Mammary epithelial cell (primary cell): ENCODE measurements at regions of chr4 and their contacts with region 1.

Region 1: DNA sequence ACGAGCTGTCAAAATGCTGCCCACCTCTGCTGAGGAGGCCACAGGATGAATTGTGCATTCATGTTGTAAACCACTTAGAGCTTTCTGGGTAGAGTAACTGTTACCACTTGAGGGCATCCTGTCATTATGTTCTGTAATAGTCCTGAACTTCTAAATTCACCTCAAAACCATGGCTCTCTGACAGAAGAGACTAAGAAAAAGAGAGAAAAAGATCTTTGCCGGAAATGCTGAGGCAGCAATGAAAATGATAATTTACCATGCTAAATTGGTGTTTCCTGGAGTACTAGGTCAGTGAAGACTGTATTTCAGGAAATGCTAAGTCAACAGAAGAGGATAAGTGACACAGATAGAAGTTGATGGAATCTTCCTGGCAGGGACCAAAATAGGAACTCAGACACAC is 942.3 kb upstream of the SLIT2 start:
- DNase-seq: peak; percentile 14
- H3K4me3 ChIP-seq: no peak overlapping the region
- H3K27ac ChIP-seq: no peak overlapping the region
- H3K4me1 ChIP-seq: no peaks in the 10 kb centered on the region
- H3K27me3 ChIP-seq: no peaks in the 10 kb centered on the region
- CTCF ChIP-seq: peak; percentile 21 to 61

Region 2: GRCh38 chr4:18689308-18690115 is 619.9 kb before region 1 on chr4:
- CTCF ChIA-PET with region 1: no interaction called
- dilution Hi-C with region 1: no loop called
- in situ Hi-C with region 1: no loop called
- intact Hi-C with region 1: loop called (anchors 2 kb)
- DNase-seq: peak; percentile 28
- H3K4me3 ChIP-seq: no peak overlapping the region
- H3K27ac ChIP-seq: no peak overlapping the region
- H3K4me1 ChIP-seq: no peaks in the 10 kb centered on the region
- H3K27me3 ChIP-seq: no peaks in the 10 kb centered on the region
- CTCF ChIP-seq: peak; percentile 79 to 83

Region 3: DNA sequence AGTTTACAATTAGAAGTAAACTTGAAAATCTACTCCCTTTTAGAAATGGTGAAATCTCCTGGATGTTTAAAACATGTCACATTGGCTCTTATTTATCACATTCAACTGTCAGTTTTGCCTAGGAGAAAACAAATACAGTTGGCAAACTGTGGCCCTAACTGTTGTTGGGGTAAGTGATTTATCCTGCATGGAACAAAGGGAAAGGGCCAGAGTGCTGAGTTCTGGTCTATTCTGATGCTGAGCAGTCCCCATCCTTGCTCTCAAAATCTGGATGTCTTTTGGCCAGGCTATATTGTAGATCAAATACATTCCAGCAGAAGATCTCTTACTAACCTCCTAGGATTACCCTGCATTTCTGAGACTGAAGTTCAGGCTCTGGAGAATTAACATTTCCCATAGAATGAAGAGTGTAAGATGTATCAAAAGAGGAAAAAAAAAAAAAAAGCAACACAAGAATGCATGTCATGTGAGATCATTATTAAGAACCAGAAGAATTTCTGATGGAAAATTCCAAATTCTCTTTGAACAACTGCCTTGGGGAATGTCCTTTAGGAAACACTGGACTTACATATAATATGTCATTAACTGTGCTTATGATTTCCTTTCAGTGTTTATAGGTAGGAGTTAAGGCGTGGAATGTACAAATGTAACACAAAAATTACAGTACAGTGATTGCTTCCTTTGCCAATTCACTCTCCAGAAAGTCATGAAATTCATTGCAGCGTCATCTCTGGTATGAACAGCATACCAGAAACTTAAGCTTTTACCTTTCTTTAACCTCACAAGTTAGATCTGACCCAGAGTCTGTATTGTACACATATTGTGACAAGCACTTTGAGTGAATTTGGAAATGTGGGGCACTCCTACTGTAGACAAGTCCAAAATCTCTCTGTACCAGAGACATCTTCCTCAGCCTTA is 275.3 kb before region 1 on chr4:
- CTCF ChIA-PET with region 1: no interaction called
- dilution Hi-C with region 1: no loop called
- in situ Hi-C with region 1: no loop called
- intact Hi-C with region 1: no loop called
- DNase-seq: no peak
- H3K4me3 ChIP-seq: no peak overlapping the region
- H3K27ac ChIP-seq: no peak overlapping the region
- H3K4me1 ChIP-seq: no peaks in the 10 kb centered on the region
- H3K27me3 ChIP-seq: no peaks in the 10 kb centered on the region
- CTCF ChIP-seq: no peak

Region 4: DNA sequence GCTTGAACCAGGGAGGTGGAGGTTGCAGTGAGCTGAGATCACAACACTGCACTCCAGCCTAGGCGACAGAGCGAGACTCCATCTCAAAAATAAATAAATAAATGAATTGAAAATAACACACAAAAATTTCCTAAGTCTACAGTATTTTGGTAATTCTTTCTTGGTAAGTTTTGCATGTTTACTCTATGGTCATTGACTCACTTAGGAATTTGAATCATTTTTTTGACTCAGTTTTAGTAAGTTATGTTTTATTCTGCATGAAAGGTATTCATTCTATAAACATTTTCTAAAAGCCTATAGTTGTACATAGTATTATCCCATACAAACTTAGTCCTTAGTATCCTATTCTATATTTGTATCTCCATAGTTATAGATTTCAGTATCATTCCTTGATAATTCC is 169.4 kb after region 1 on chr4:
- CTCF ChIA-PET with region 1: no interaction called
- dilution Hi-C with region 1: no loop called
- in situ Hi-C with region 1: no loop called
- intact Hi-C with region 1: no loop called
- DNase-seq: no peak
- H3K4me3 ChIP-seq: no peak overlapping the region
- H3K27ac ChIP-seq: no peak overlapping the region
- H3K4me1 ChIP-seq: no peaks in the 10 kb centered on the region
- H3K27me3 ChIP-seq: no peaks in the 10 kb centered on the region
- CTCF ChIP-seq: no peak